Motor neuron (in vitro differentiated cells): ENCODE measurements at regions of chr12 and their contacts with region 1.

Region 1: DNA sequence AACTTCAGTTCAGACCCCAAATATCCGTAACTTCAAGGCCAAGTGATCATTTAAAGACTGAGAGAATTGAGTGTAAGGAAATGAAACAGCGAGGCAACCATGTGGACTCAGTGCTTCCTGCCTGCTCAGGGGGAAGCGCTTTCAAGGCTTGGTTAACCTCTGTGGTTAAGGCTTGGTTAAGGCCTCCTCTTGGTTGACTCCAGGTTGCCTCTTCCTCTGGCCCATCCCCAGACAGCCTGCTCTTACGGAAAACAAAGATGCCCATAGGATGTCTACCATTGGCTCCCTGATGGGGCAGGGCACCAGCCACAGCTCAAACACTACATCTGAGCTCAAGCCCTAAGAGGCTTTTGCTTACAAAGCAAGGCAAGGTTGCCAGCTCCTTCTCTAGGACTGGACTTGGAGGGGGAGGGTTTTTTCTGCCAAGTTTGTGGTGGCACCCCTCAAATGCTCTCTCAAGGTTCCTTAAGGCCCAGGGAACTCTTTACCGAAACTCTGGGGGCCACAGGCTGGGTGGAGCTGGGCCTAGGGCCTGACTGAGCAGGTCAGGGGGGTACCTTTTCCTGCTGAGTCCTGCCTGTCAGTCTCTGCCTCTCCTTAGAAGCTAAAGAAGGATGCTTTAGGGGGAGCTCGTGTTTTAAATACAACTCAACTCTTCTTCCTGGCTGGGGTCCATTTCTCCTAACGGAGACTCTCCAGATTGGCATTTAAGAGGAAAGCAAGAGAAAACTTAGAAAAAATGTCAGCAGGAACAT is 13.7 kb downstream of the COL2A1 start:
- ATAC-seq: no peak
- H3K4me3 ChIP-seq: no peak overlapping the region
- H3K27ac ChIP-seq: no peak overlapping the region
- H3K4me1 ChIP-seq: peaks cover 31 to 35% of the 10 kb centered on the region in 2 donors

Region 2: DNA sequence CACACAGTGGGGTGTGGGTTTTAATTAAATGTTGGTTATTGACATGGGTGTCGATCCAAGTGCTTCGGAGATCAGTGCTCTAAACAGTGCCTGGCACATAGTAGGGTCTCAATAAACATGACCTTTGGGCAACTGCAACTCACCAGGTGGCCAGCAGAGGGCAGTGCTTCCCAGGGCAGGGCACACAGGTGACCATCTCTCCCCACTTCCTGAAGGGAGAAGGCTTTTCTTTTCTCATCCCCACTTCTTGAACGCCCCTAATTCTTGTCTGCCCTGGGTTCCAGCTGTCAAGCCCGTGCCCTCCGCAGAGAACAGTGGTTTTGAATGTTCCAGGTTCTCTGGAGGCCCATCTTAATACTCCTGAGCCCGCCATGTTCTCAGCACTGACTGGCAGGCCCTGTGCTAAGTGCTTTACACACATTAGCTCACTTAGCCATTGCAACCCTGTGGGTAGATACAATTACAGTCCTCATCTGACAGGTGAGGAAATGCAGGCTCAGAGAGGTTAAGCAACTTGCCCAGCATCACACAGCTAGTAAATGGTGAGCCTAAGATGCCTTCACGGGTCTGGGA is 248.2 kb before region 1 on chr12:
- in situ Hi-C with region 1: loop called in 1 of 9 experiments (anchors 25 kb)
- ATAC-seq: peak in 1 of 8 experiments; percentile 21
- H3K4me3 ChIP-seq: no peak overlapping the region
- H3K27ac ChIP-seq: no peak overlapping the region
- H3K4me1 ChIP-seq: peaks cover 7 to 17% of the 10 kb centered on the region in 2 donors